ENCODE measurements at regions of chr16 and their contacts with region 1.

Region 1: DNA sequence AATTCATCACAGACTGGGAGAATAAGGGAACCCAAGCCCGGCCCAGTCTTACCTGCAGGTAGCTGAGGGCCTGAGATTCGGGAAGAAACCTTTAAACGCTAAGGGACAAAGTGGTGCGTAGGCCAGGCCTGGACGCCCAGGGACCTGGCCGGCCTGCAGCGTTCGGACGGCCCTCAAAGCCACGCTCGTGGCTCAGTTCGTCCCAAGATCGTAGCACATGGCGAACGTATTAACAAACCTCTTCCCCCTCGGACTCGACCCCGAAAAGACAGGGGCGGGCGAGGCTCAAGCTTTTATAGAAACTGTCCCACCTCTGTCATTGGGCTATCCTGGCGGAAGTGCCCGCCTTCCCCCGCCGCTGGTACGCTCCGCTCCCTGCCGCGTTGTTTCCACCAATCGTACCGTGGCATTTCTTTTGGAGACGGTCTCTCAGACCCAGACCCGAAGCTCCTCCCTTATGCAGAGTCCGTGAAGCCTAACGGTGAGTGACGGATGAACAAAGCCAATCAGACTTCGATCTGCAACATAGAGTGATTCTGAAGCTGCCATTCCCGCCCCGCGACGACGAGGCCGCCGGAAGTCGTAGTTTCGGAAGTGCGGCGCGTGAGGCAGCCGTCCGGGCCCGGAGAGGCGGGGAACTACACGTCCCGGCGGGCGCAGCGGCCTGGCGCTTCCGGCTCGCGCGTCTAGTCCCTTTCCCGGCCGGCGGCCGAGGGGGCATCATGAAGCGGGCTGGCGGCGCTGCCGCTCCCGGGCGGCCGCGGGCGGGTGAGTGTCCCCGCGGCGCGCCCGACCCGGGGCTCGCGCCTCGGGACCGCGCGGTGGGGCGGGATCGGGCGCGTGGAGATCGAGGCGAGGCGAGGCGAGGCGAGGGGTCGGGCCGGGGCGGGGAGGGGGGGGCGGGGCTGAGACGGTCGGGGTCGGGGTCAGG is at the start of gene TRAF7:
- DNase-seq: peak; percentile 93 to 100 (median 96)
- ATAC-seq: peak; percentile 91
- H3K4me3 ChIP-seq: peak within 1 kb of the TSS; percentile 69 to 95
- H3K4me3 Mint-ChIP-seq: peak within 1 kb of the TSS; percentile 93
- H3K27ac ChIP-seq: peak within 1 kb of the TSS; percentile 79 to 82
- H3K27ac Mint-ChIP-seq: peak within 1 kb of the TSS; percentile 87
- H3K4me1 ChIP-seq: peaks cover 66% of the 10 kb centered on the region
- H3K4me1 Mint-ChIP-seq: peaks cover 60% of the 10 kb centered on the region
- H3K27me3 ChIP-seq: peaks cover 0 to 2% of the 10 kb centered on the region in 2 experiments
- H3K27me3 Mint-ChIP-seq: no peaks in the 10 kb centered on the region
- CTCF ChIP-seq: no peak
- total RNA-seq, gene TRAF7: 21.4 to 21.8 TPM

Region 2: DNA sequence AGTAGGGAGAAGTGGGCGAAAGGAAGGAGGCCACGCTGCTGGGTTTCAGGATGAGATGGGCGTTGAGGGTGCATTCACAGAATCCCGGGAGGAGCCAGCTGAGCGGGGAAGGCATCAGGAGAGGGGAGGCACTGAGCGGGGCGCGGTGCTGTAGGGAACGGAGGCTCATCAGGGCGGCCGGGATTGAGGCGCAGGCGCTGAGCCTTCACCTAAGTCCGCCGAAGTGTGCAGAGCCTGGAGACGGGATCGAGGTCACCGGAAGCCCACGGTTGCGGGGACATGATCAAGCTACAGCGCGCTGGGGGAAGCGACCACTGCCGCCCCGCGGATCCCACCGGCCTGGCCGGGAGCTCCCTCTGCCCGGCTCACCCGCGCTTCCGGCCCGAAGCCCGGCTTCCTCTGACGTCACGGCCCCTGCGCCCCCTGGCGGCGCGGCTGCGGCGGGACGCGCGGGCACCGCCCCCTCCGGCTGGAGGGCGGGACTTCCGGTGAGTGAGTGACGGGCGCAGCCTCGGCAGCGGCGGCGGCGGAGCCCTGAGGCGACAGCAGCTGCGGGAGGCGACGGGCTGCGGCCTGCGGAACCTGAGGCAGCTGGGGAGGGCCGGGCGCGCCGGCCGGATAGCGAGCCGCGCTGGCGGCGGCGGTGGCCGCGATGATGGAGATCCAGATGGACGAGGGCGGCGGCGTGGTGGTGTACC is 449.5 kb before region 1 on chr16 and contains the start of gene MAPK8IP3:
- CTCF ChIA-PET with region 1: no interaction called
- POLR2A ChIA-PET with region 1: no interaction called
- intact Hi-C with region 1: loop called in 1 of 2 experiments (anchors 5 kb)
- DNase-seq: peak; percentile 88 to 99 (median 95)
- ATAC-seq: peak; percentile 74
- H3K4me3 ChIP-seq: peak within 1 kb of the TSS; percentile 94 to 99
- H3K4me3 Mint-ChIP-seq: peak within 1 kb of the TSS; percentile 99
- H3K27ac ChIP-seq: peak within 1 kb of the TSS; percentile 83 to 90
- H3K27ac Mint-ChIP-seq: peak within 1 kb of the TSS; percentile 97
- H3K4me1 ChIP-seq: peaks cover 32% of the 10 kb centered on the region
- H3K4me1 Mint-ChIP-seq: peaks cover 43% of the 10 kb centered on the region
- H3K27me3 ChIP-seq: no peaks in the 10 kb centered on the region
- H3K27me3 Mint-ChIP-seq: no peaks in the 10 kb centered on the region
- CTCF ChIP-seq: peak; percentile 92
- total RNA-seq, gene MAPK8IP3: 381 to 419 TPM

Region 3: DNA sequence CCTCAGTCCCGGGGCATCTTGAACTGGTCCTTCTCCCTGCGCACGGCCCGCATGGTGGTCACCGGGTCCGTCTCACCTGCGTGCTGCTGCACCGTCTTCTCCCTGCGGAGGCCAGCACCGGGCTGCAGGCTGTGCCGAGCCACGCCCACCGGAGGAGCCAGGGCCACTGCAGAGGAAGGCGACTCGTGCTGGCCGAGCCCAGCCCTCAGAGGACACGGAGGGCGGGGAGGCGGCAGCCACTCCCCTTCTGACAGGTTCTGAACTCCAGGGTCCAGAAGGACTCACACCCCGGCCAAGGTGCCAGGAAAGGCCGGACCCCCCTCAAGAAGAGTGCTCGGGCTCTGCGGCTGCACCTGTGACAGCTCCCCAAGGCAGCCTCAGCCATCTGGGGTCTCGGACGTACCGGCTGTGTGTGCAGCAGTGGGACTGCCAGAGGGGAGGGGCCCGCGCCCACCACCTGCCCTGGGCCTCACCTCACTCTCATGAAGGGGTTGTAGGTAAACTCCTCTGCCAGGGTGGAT is 346.0 kb before region 1 on chr16:
- CTCF ChIA-PET with region 1: no interaction called
- POLR2A ChIA-PET with region 1: no interaction called
- intact Hi-C with region 1: no loop called
- DNase-seq: peak in 1 of 9 experiments; percentile 7
- ATAC-seq: no peak
- H3K4me3 ChIP-seq: no peak overlapping the region
- H3K4me3 Mint-ChIP-seq: no peak overlapping the region
- H3K27ac ChIP-seq: no peak overlapping the region
- H3K27ac Mint-ChIP-seq: no peak overlapping the region
- H3K4me1 ChIP-seq: no peaks in the 10 kb centered on the region
- H3K4me1 Mint-ChIP-seq: peaks cover 10% of the 10 kb centered on the region
- H3K27me3 ChIP-seq: no peaks in the 10 kb centered on the region
- H3K27me3 Mint-ChIP-seq: no peaks in the 10 kb centered on the region
- CTCF ChIP-seq: no peak

Region 4: DNA sequence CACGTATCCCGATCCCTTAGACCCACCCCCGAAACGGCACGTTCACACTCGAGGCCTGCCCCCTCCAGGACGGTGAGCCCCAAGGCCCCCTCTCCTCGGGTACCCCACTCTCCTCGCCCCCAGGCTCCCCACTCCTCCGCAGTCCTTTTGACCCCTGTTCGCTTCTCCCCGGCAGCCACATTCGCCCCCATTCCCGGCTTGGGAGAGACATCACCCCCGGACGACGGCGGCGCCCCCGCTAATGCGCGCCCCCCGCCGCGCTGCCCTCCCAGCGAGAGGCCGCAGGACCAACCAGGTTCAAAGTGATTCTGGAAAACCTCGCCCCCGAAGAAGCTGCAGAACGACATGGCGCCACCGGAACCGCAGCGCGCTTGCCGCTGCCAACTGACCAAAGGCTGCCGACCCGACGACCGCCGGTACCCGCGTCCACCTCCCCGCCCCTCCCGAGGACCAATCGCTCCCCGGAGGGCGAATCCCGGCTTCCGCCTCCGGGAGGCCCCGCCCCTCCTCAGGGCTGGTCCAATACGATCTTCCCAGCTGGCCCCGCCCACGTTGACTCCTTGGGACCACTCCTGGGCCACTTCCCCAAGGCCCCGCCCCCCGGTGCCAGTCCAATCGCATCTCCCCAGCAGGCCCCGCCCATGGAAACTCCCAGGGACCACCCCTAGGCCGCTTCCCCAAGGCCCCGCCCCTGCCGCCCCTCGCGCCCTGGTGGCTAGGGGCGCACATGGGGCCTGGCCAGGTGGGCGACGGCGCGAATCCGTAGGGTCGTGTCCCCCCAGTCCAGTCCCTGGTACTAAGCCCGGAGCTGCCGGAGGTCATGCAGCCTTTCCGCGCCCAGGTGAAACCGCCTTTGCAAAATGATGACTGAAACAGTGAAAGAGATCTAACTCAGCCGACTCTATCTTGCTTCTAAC is 212.3 kb before region 1 on chr16 and contains the start of gene MSRB1:
- CTCF ChIA-PET with region 1: interaction called, 3 read pairs
- POLR2A ChIA-PET with region 1: interaction called, 5 read pairs
- intact Hi-C with region 1: loop called in 1 of 2 experiments (anchors 1 kb)
- DNase-seq: peak; percentile 96 to 100 (median 99)
- ATAC-seq: peak; percentile 99
- H3K4me3 ChIP-seq: peak within 1 kb of the TSS; percentile 83 to 94
- H3K4me3 Mint-ChIP-seq: peak within 1 kb of the TSS; percentile 85
- H3K27ac ChIP-seq: peak within 1 kb of the TSS in 1 of 2 experiments; percentile 62
- H3K27ac Mint-ChIP-seq: peak within 1 kb of the TSS; percentile 55
- H3K4me1 ChIP-seq: peaks cover 13% of the 10 kb centered on the region
- H3K4me1 Mint-ChIP-seq: peaks cover 11% of the 10 kb centered on the region
- H3K27me3 ChIP-seq: no peaks in the 10 kb centered on the region
- H3K27me3 Mint-ChIP-seq: no peaks in the 10 kb centered on the region
- CTCF ChIP-seq: no peak
- total RNA-seq, gene MSRB1: 1.9 to 3.0 TPM

Region 5: GRCh38 chr16:2009789-2010510 is 145.4 kb before region 1 on chr16 and contains the start of gene ZNF598:
- CTCF ChIA-PET with region 1: interaction called, 8 read pairs
- POLR2A ChIA-PET with region 1: interaction called, 18 read pairs
- intact Hi-C with region 1: loop called in 1 of 2 experiments (anchors 1 kb)
- DNase-seq: peak; percentile 44 to 92 (median 80)
- ATAC-seq: peak; percentile 93
- H3K4me3 ChIP-seq: peak within 1 kb of the TSS; percentile 71 to 88
- H3K4me3 Mint-ChIP-seq: peak within 1 kb of the TSS; percentile 91
- H3K27ac ChIP-seq: peak within 1 kb of the TSS; percentile 96 to 97
- H3K27ac Mint-ChIP-seq: peak within 1 kb of the TSS; percentile 97
- H3K4me1 ChIP-seq: peaks cover 50% of the 10 kb centered on the region
- H3K4me1 Mint-ChIP-seq: peaks cover 42% of the 10 kb centered on the region
- H3K27me3 ChIP-seq: no peaks in the 10 kb centered on the region
- H3K27me3 Mint-ChIP-seq: no peaks in the 10 kb centered on the region
- CTCF ChIP-seq: no peak
- total RNA-seq, gene ZNF598: 49.0 to 50.8 TPM

Region 6: DNA sequence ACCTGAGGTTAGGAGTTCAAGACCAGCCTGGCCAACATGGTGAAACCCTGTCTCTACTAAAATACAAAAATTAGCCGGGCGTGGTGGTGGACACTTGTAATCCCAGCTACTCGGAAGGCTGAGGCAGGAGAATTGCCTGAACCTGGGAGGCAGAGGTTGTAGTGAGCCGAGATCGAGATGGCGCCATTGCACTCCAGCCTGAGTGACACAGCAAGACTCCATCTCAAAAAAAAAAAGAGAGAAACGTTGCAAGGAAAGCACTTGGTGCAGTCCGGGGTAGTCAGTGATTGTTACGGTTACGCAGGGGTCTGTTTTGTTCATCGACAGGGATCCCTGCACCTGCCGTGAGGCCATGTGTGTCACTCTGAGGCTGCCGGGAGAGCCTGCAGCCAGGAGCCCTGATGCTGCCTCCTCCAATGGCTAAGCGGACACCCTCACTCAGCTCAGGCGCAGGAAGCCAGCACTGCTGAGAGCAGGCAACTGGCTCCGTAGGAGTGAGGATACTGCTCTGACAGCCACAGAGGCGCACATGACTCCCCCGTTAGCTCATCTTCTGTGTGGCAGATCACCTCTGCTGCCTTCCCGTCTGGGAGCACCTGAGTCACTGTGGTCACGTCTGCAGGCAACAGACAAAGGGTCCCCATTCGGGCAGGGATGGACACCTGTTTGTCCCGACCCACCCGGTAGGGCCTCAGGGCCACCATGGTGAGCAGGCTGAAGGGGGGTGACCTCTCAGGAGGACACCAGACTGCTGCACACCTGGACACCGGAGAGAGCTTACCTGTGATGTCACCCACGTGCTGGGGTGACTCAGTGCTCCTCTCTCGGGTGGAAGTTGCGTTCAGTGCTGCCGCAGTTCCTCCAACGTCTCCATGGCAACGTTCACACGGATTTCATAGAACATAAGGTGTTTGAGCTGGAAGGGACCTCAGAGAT is 12.1 kb before region 1 on chr16:
- CTCF ChIA-PET with region 1: interaction called, 86 read pairs
- POLR2A ChIA-PET with region 1: interaction called, 23 read pairs
- intact Hi-C with region 1: loop called in 1 of 2 experiments (anchors 1 kb)
- DNase-seq: no peak
- ATAC-seq: no peak
- H3K4me3 ChIP-seq: no peak overlapping the region
- H3K4me3 Mint-ChIP-seq: no peak overlapping the region
- H3K27ac ChIP-seq: no peak overlapping the region
- H3K27ac Mint-ChIP-seq: no peak overlapping the region
- H3K4me1 ChIP-seq: peaks cover 3% of the 10 kb centered on the region
- H3K4me1 Mint-ChIP-seq: peaks cover 8% of the 10 kb centered on the region
- H3K27me3 ChIP-seq: no peaks in the 10 kb centered on the region
- H3K27me3 Mint-ChIP-seq: no peaks in the 10 kb centered on the region
- CTCF ChIP-seq: no peak

Region 7: GRCh38 chr16:2267913-2268666 is 112.7 kb after region 1 on chr16 and contains the start of gene RNPS1:
- CTCF ChIA-PET with region 1: no interaction called
- POLR2A ChIA-PET with region 1: interaction called, 4 read pairs
- intact Hi-C with region 1: loop called (anchors 1 kb)
- DNase-seq: peak; percentile 90 to 99 (median 97)
- ATAC-seq: peak; percentile 81
- H3K4me3 ChIP-seq: peak within 1 kb of the TSS; percentile 94 to 100
- H3K4me3 Mint-ChIP-seq: peak within 1 kb of the TSS; percentile 96
- H3K27ac ChIP-seq: peak within 1 kb of the TSS; percentile 96 to 99
- H3K27ac Mint-ChIP-seq: peak within 1 kb of the TSS; percentile 97
- H3K4me1 ChIP-seq: peaks cover 30% of the 10 kb centered on the region
- H3K4me1 Mint-ChIP-seq: peaks cover 34% of the 10 kb centered on the region
- H3K27me3 ChIP-seq: no peaks in the 10 kb centered on the region
- H3K27me3 Mint-ChIP-seq: no peaks in the 10 kb centered on the region
- CTCF ChIP-seq: no peak
- total RNA-seq, gene RNPS1: 239 to 246 TPM

Region 8: DNA sequence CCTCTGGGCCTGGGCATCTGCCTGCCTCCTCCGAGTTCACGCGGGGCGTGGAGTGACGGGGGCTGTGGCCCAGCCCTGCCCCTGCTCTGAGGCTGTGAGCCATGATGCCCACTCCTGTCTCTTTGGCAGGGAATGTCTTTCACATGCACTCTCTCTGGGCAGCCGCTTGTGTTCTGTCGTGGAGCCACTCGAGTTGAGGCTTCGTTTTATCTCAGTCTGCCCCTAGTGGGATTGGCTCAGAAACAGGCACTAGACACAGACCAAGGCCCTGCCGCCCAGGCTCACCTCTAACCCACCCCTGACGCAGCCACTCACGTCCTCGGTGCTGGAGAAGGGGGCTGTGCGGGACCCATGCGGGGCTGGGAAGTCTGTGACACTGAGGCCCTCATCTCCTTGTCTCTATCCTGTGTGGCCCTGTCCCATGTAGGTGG is 459.4 kb after region 1 on chr16:
- CTCF ChIA-PET with region 1: no interaction called
- POLR2A ChIA-PET with region 1: no interaction called
- intact Hi-C with region 1: no loop called
- DNase-seq: peak in 1 of 9 experiments; percentile 1
- ATAC-seq: no peak
- H3K4me3 ChIP-seq: no peak overlapping the region
- H3K4me3 Mint-ChIP-seq: no peak overlapping the region
- H3K27ac ChIP-seq: no peak overlapping the region
- H3K27ac Mint-ChIP-seq: no peak overlapping the region
- H3K4me1 ChIP-seq: no peaks in the 10 kb centered on the region
- H3K4me1 Mint-ChIP-seq: peaks cover 2% of the 10 kb centered on the region
- H3K27me3 ChIP-seq: no peaks in the 10 kb centered on the region
- H3K27me3 Mint-ChIP-seq: no peaks in the 10 kb centered on the region
- CTCF ChIP-seq: no peak

Region 9: DNA sequence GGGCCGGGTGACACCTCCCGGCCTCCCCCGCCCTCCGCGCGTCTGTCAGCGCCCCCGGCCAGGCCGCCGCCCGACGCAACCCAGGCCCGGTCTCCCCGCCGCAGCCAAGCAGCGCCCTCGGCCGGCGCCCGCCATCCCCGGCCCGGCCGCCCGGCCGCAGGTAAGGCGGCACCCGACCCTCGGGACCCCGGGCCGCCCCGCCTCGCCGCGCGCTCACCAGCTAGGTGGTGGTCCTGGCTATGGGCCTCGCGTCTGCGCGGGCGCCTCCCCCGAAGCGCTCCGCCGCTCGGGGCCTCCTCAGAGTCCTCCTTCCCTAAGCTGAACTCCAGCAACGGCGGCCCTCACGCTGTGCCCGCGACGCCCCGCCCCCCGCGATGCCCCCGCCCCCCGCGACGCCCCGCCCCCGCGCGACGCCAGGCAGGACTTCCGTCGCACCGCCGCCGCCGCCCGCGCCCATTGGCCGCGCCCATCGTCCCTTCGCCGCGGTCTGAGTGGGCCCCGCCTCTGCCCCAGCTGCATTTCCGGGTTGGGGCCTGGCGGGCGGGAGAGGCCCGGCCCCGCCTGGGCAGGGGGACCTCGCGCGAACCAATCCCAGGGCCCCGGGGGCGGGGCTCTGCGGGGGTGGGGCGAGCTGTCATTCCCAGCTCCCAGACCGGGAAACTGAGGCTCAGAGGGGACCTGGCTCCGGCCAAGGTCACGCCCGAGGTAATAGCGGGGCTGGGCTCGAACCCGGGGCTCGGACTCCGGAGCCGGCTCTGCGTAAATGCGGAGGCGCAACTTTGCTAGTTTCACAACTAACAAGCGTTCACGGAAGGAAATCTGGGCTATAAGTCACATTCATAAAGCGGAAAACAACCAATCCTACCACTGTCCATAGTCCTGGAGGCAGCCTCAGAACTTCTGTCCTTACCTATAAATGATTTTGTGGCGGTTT is 518.0 kb after region 1 on chr16:
- CTCF ChIA-PET with region 1: no interaction called
- POLR2A ChIA-PET with region 1: interaction called, 3 read pairs
- intact Hi-C with region 1: loop called in 1 of 2 experiments (anchors 2 kb)
- DNase-seq: peak; percentile 91 to 98 (median 95)
- ATAC-seq: peak; percentile 92
- H3K4me3 ChIP-seq: peak overlapping the region; percentile 80 to 94
- H3K4me3 Mint-ChIP-seq: peak overlapping the region; percentile 84
- H3K27ac ChIP-seq: peak overlapping the region; percentile 76 to 78
- H3K27ac Mint-ChIP-seq: peak overlapping the region; percentile 80
- H3K4me1 ChIP-seq: peaks cover 14% of the 10 kb centered on the region
- H3K4me1 Mint-ChIP-seq: peaks cover 35% of the 10 kb centered on the region
- H3K27me3 ChIP-seq: no peaks in the 10 kb centered on the region
- H3K27me3 Mint-ChIP-seq: no peaks in the 10 kb centered on the region
- CTCF ChIP-seq: no peak